GM23248 (cell line): ENCODE measurements at regions of chr6 and their contacts with region 1.

Region 1: GRCh38 chr6:143575440-143575839 is 63.9 kb upstream of the FUCA2 start:
- DNase-seq: peak; percentile 83
- H3K4me3 ChIP-seq: peak overlapping the region; percentile 66
- H3K27ac ChIP-seq: peak overlapping the region; percentile 24
- H3K4me1 ChIP-seq: peaks cover 16% of the 10 kb centered on the region
- H3K27me3 ChIP-seq: no peaks in the 10 kb centered on the region

Region 2: GRCh38 chr6:143400258-143401067 is 175.0 kb before region 1 on chr6:
- in situ Hi-C with region 1: no loop called
- DNase-seq: no peak
- H3K4me3 ChIP-seq: no peak overlapping the region
- H3K27ac ChIP-seq: no peak overlapping the region
- H3K4me1 ChIP-seq: peaks cover 45% of the 10 kb centered on the region
- H3K27me3 ChIP-seq: no peaks in the 10 kb centered on the region

Region 3: GRCh38 chr6:143842902-143843676 is 267.6 kb after region 1 on chr6 and contains the start of gene LTV1:
- in situ Hi-C with region 1: loop called (anchors 10 kb)
- DNase-seq: peak; percentile 99
- H3K4me3 ChIP-seq: peak within 1 kb of the TSS; percentile 92
- H3K27ac ChIP-seq: peak within 1 kb of the TSS; percentile 91
- H3K4me1 ChIP-seq: 0 out of 2 replicates have a peak, but pooled peaks cover 10% of the 10 kb centered on the region
- H3K27me3 ChIP-seq: no peaks in the 10 kb centered on the region
- total RNA-seq, gene LTV1: 13.3 and 17.9 TPM in 2 replicates

Region 4: DNA sequence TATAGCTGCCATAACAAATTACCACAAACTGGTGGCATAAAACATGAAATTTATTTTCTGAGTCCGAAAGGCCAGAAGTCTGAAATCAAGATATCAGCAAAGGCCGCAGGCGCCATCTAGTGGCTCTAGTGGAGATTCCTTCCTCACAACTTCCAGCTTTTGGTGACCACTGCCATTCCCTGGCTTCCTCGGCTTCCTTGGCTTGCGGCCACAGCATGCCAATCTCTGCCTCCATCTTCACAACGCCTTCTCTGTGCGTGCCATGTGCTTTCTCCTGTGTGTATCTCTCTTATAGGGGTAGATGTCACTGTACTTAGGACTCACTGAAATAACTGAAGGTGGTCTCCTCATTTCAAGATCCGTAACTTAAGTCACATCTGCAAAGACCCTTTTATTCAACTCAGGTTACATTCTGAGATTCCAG is 438.1 kb after region 1 on chr6:
- in situ Hi-C with region 1: loop called (anchors 10 kb)
- DNase-seq: peak; percentile 88
- H3K4me3 ChIP-seq: no peak overlapping the region
- H3K27ac ChIP-seq: no peak overlapping the region
- H3K4me1 ChIP-seq: no peaks in the 10 kb centered on the region
- H3K27me3 ChIP-seq: no peaks in the 10 kb centered on the region